Activated naive CD4-positive, alpha-beta T cell treated with anti-CD3 and anti-CD28 coated beads for 36 hours (primary cell): ENCODE measurements at regions of chr12 and their contacts with region 1.

Region 1: DNA sequence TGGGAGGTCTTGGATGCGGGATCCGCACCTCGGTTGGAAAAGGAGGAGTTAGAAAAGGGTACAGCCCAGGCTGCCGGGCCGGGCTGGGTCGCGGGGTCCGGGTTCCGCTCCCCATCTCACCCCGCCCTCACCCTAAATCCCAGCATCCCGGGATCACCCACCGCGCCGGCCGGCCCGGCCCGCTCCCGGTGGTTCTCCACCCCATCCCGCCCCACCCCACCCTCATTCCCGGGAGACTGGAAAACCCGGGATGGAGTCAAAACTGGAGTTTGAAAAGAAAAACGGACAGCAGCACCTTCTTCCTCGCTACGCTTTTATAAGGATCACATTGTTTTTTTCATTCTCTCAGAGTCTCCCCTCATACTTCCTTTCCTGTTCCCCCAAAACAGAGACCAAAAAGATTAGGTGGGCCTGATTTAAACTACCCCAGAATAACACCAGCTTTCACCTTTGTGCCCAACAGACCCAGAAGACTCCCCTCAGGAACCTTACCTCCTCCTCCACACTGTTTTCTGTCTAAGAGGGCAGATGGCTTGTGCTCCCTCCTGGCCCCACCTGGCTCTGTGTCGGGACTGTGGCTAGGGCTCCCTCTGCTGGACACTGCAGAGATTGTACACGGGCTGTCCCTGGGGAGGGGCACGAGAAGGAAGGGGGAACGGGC is 2.8 kb downstream of the GLI1 start:
- DNase-seq: peak; percentile 95
- H3K4me3 Mint-ChIP-seq: peak overlapping the region; percentile 79
- H3K27ac Mint-ChIP-seq: peak overlapping the region; percentile 19
- H3K4me1 Mint-ChIP-seq: peaks cover 47% of the 10 kb centered on the region
- H3K27me3 Mint-ChIP-seq: peaks cover 9% of the 10 kb centered on the region

Region 2: GRCh38 chr12:57261428-57261865 is 200.9 kb before region 1 on chr12:
- CTCF ChIA-PET with region 1: interaction called, 15 read pairs
- intact Hi-C with region 1: loop called (anchors 1 kb)
- DNase-seq: no peak
- H3K4me3 Mint-ChIP-seq: no peak overlapping the region
- H3K27ac Mint-ChIP-seq: no peak overlapping the region
- H3K4me1 Mint-ChIP-seq: no peaks in the 10 kb centered on the region
- H3K27me3 Mint-ChIP-seq: no peaks in the 10 kb centered on the region

Region 3: GRCh38 chr12:57430931-57431720 is 31.3 kb before region 1 on chr12 and contains the start of gene R3HDM2:
- CTCF ChIA-PET with region 1: interaction called, 8 read pairs
- intact Hi-C with region 1: loop called (anchors 1 kb)
- DNase-seq: peak; percentile 97
- H3K4me3 Mint-ChIP-seq: peak within 1 kb of the TSS; percentile 94
- H3K27ac Mint-ChIP-seq: peak within 1 kb of the TSS; percentile 98
- H3K4me1 Mint-ChIP-seq: peaks cover 37% of the 10 kb centered on the region
- H3K27me3 Mint-ChIP-seq: no peaks in the 10 kb centered on the region
- total RNA-seq, gene R3HDM2: 42.2 to 44.8 TPM

Region 4: DNA sequence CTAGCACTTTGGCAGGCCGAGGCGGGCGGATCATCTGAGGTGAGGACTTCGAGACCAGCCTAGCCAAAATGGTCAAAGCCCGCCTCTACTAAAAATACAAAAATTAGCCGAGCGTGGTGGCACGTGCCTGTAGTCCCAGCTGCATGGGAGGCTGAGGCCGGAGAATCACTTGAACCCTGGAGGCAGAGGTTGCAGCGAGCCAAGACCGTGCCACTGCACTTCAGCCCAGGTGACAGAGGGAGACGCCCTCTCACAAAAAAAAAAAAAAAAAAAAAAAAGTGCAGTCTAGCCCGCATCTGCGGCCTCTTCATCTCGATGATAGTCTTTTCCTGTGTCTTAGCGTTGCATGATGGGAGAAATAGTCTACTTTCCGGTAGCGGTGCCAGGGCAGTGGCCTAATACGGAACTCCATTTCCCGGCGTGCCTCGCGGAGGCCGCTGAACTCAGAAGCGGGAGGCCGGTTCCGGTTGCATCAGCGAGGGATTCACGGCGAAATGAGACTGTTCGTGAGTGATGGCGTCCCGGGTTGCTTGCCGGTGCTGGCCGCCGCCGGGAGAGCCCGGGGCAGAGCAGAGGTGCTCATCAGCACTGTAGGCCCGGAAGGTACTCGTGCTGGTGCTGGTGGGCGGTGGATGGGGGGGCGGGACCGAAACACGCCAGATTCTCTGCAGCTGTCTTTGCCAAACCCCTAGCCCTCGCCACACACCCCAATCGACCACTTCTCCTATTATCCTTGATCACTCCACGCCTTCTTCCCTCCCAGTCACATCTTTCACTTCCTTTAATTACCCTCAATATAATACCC is 25.4 kb after region 1 on chr12 and contains the start of gene MARS1:
- CTCF ChIA-PET with region 1: interaction called, 207 read pairs
- intact Hi-C with region 1: loop called (anchors 1 kb)
- DNase-seq: peak; percentile 97
- H3K4me3 Mint-ChIP-seq: peak within 1 kb of the TSS; percentile 97
- H3K27ac Mint-ChIP-seq: peak within 1 kb of the TSS; percentile 94
- H3K4me1 Mint-ChIP-seq: peaks cover 49% of the 10 kb centered on the region
- H3K27me3 Mint-ChIP-seq: no peaks in the 10 kb centered on the region
- total RNA-seq, gene MARS1: 481 to 489 TPM

Region 5: GRCh38 chr12:57632694-57633477 is 170.5 kb after region 1 on chr12 and contains the start of gene B4GALNT1:
- CTCF ChIA-PET with region 1: interaction called, 5 read pairs
- intact Hi-C with region 1: loop called (anchors 1 kb)
- DNase-seq: peak; percentile 65
- H3K4me3 Mint-ChIP-seq: peak within 1 kb of the TSS; percentile 73
- H3K27ac Mint-ChIP-seq: no peak within 1 kb of the TSS
- H3K4me1 Mint-ChIP-seq: peaks cover 8% of the 10 kb centered on the region
- H3K27me3 Mint-ChIP-seq: peaks cover 52% of the 10 kb centered on the region
- total RNA-seq, gene B4GALNT1: 1.4 to 1.8 TPM

Region 6: GRCh38 chr12:57765042-57765697 is 302.8 kb after region 1 on chr12:
- CTCF ChIA-PET with region 1: no interaction called
- intact Hi-C with region 1: no loop called
- DNase-seq: peak; percentile 80
- H3K4me3 Mint-ChIP-seq: peak overlapping the region; percentile 88
- H3K27ac Mint-ChIP-seq: peak overlapping the region; percentile 63
- H3K4me1 Mint-ChIP-seq: peaks cover 30% of the 10 kb centered on the region
- H3K27me3 Mint-ChIP-seq: peaks cover 6% of the 10 kb centered on the region

Region 7: DNA sequence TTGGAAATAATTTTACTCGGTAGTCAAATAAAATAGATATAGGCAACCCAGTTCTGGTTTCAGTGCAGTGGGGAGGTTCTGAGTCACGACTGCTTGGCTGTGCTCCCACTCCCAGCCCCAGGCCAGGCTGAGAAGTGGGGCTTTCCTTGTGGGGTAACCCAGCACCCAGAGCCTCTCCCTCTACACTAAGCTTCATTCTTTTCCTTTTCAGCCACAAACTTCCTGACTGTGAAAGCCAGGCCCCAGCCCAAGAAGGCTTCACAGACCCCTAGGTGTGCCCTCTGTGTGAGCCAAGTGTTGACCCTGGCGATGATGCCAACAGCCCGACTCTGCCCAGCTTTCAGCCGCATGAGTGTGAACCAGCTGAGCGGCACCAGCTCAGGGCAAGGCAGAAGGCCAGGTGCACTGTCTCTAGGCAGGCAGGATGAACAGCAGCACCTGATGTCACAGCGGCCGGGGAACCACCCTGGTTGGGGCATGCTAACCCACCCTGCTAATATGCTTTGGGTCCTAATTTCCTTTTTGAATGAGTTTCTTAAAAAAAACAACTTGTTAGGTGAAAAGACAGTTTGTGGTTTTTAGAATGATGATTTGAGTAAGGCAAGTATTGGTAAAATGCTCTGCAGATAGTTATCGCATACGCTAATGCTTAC is 436.8 kb after region 1 on chr12:
- CTCF ChIA-PET with region 1: no interaction called
- intact Hi-C with region 1: loop called (anchors 5 kb)
- DNase-seq: peak; percentile 95
- H3K4me3 Mint-ChIP-seq: peak overlapping the region; percentile 69
- H3K27ac Mint-ChIP-seq: peak overlapping the region; percentile 99
- H3K4me1 Mint-ChIP-seq: peaks cover 60% of the 10 kb centered on the region
- H3K27me3 Mint-ChIP-seq: no peaks in the 10 kb centered on the region